OCI-LY7 (cell line): ENCODE measurements at regions of chr12 and their contacts with region 1.

Region 1: DNA sequence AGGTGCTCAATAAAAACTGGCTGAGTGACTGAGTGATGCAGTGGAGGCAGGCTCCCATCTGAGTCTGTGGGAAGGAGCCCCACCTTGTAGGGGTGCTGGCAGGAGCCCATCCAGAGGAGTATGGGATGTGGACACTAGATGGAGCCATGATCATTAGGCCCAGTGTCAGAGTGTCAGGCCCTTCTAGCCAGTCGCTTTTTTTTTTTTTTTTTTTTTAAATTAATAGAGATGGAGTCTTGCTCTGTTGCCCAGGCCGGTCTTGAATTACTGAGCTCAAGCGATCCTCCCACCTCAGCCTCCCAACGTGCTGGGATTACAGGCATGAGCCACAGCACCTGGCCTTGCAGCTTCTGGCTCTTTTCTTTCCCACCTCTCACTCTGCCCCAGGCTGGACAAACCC is 11.5 kb downstream of the RITA1 start:
- DNase-seq: peak; percentile 87
- H3K4me3 ChIP-seq: no peak overlapping the region
- H3K27ac ChIP-seq: peak overlapping the region; percentile 65
- H3K4me1 ChIP-seq: peaks cover 54% of the 10 kb centered on the region
- CTCF ChIP-seq: peak; percentile 87

Region 2: GRCh38 chr12:113174461-113175384 is 22.3 kb before region 1 on chr12:
- CTCF ChIA-PET with region 1: no interaction called
- POLR2A ChIA-PET with region 1: no interaction called
- intact Hi-C with region 1: no loop called
- DNase-seq: peak; percentile 84
- H3K4me3 ChIP-seq: peak overlapping the region; percentile 10
- H3K27ac ChIP-seq: peak overlapping the region; percentile 98
- H3K4me1 ChIP-seq: peaks cover 46% of the 10 kb centered on the region
- CTCF ChIP-seq: peak; percentile 94

Region 3: DNA sequence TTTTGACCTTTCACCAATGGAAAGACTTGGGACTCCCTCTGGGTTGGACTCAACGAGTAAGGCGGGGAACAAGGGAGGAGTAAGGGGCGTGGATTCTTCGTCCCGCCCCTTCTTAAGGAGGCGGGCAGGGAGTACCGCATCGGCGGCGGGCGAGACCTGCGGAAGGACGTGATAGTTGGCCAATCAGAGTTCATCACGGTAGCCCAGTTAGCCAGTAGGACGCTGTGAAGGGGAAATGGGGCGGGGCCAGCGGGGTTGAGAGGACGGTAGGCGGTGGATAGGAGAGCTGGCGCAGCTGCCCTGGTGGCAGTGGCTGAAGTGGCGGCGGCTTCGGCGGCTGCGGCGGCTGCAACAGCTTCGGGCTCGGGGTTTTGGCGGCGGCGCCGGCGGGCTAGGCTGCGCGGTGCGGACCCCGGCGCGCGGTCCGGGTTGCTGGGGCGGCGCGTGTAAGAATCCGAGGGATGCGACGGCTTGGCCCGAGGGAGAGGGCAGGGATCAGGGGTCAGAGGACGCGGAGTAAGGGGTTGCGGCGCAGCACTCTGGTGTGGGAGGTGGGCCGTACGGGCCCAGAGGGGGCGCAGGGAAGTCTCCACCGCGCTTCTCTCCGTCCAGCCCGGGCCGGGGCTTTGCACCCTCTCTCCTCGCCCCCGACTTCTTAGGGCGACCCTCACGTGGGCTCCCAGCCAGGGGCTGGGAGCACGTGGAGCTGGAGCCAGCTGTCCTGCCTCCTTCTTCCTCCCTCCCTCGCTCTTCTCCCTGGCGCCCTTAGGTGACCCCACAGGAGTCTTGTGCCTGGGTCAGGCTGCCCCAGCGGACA is 24.4 kb after region 1 on chr12 and contains the start of gene TPCN1:
- CTCF ChIA-PET with region 1: interaction called, 3 read pairs
- POLR2A ChIA-PET with region 1: interaction called, 183 read pairs
- intact Hi-C with region 1: loop called (anchors 1 kb)
- DNase-seq: peak; percentile 100
- H3K4me3 ChIP-seq: peak within 1 kb of the TSS; percentile 100
- H3K27ac ChIP-seq: peak within 1 kb of the TSS; percentile 99
- H3K4me1 ChIP-seq: peaks cover 47% of the 10 kb centered on the region
- CTCF ChIP-seq: no peak
- total RNA-seq, gene TPCN1: 72.4 and 96.0 TPM in 2 replicates

Region 4: GRCh38 chr12:113232840-113233585 is 36.0 kb after region 1 on chr12:
- CTCF ChIA-PET with region 1: no interaction called
- POLR2A ChIA-PET with region 1: interaction called, 183 read pairs
- intact Hi-C with region 1: loop called (anchors 1 kb)
- DNase-seq: peak; percentile 94
- H3K4me3 ChIP-seq: peak overlapping the region; percentile 19
- H3K27ac ChIP-seq: peak overlapping the region; percentile 74
- H3K4me1 ChIP-seq: peaks cover 62% of the 10 kb centered on the region
- CTCF ChIP-seq: peak; percentile 76

Region 5: DNA sequence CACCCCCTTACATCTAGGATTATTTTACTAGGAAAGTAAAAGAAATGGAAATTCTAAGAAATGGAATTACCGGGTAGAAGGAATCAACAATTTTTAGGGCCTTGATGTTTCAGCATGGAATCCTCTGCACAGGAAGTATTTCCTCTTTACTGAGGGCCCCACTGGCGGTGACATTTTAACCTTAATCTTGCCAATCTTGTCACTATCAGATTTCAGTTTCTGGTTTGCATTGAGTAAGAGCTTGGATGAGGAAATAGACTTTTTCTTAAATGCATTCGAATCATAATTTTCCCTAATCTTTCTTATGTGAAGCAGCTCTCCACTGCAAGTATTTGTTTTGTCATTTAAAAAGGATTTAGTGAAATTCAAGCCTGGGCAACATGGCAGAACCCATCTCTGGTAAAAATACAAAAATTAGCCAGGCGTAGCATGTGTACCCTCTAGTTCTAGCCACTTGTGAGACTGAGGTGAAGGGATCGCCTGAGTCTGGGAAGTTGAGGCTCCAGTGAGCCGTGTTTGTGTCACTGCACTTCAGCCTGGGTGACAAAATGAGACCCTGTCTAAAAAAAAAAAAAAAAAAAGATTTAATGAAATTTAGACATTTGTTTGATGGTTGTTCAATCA is 65.0 kb after region 1 on chr12:
- CTCF ChIA-PET with region 1: no interaction called
- POLR2A ChIA-PET with region 1: no interaction called
- intact Hi-C with region 1: no loop called
- DNase-seq: peak; percentile 47
- H3K4me3 ChIP-seq: no peak overlapping the region
- H3K27ac ChIP-seq: peak overlapping the region; percentile 59
- H3K4me1 ChIP-seq: peaks cover 35% of the 10 kb centered on the region
- CTCF ChIP-seq: no peak

Region 6: GRCh38 chr12:113271853-113272561 is 75.0 kb after region 1 on chr12:
- CTCF ChIA-PET with region 1: no interaction called
- POLR2A ChIA-PET with region 1: no interaction called
- intact Hi-C with region 1: loop called (anchors 10 kb)
- DNase-seq: no peak
- H3K4me3 ChIP-seq: no peak overlapping the region
- H3K27ac ChIP-seq: no peak overlapping the region
- H3K4me1 ChIP-seq: no peaks in the 10 kb centered on the region
- CTCF ChIP-seq: no peak

Region 7: GRCh38 chr12:113310489-113310888 is 113.5 kb after region 1 on chr12:
- CTCF ChIA-PET with region 1: no interaction called
- POLR2A ChIA-PET with region 1: no interaction called
- intact Hi-C with region 1: loop called (anchors 5 kb)
- DNase-seq: peak; percentile 33
- H3K4me3 ChIP-seq: no peak overlapping the region
- H3K27ac ChIP-seq: no peak overlapping the region
- H3K4me1 ChIP-seq: peaks cover 21% of the 10 kb centered on the region
- CTCF ChIP-seq: peak; percentile 57

Region 8: GRCh38 chr12:113334786-113335540 is 138.0 kb after region 1 on chr12 and contains the start of gene SLC8B1:
- CTCF ChIA-PET with region 1: no interaction called
- POLR2A ChIA-PET with region 1: no interaction called
- intact Hi-C with region 1: loop called (anchors 5 kb)
- DNase-seq: peak; percentile 86
- H3K4me3 ChIP-seq: peak within 1 kb of the TSS; percentile 77
- H3K27ac ChIP-seq: peak within 1 kb of the TSS; percentile 74
- H3K4me1 ChIP-seq: peaks cover 26% of the 10 kb centered on the region
- CTCF ChIP-seq: no peak
- total RNA-seq, gene SLC8B1: 40.6 and 47.1 TPM in 2 replicates

Region 9: GRCh38 chr12:113422030-113422885 is 225.3 kb after region 1 on chr12 and contains the start of gene SDSL:
- CTCF ChIA-PET with region 1: interaction called, 5 read pairs
- POLR2A ChIA-PET with region 1: no interaction called
- intact Hi-C with region 1: loop called (anchors 5 kb)
- DNase-seq: peak; percentile 83
- H3K4me3 ChIP-seq: peak within 1 kb of the TSS; percentile 45
- H3K27ac ChIP-seq: peak within 1 kb of the TSS; percentile 48
- H3K4me1 ChIP-seq: peaks cover 31% of the 10 kb centered on the region
- CTCF ChIP-seq: no peak
- total RNA-seq, gene SDSL: not detected in 2 replicates